ENCODE measurements at regions of chr9 and their contacts with region 1.

Region 1: DNA sequence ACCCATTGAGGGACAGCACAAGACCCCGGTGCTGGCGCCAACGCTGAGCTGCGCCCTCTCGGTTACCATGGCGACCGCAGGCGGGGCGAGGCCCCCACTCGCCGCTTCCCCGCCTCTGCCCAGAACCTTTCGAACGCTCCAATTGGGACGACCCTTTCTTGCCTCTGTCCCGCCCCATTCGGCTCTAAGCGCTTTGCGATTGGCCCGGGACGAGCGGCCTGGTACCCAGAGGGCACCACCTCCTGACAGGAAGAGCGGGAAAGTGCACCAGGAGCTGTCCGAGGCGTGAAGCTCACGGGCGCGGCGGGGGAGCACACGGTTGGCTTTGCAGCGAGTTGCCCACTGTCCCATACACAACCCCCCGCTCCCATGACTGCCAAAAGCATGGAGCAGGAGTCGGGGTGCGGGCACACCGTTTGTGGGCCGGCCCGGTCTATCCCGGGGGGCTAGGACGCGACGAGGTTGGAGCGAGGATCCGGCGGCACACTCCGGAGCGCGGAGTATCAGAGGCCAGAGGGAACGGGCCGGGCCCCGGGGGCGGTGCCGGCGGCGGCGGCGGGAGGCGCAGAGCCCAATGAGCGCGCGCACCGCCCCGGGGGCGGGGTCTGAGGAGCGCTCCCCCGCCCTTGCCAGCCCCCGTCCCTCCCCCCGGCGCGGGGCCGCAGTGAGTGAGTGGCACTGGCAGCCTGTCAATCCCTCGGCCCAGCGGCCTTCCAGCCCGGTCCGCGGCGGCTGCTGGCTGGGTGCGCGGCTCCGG is 978 bp upstream of the PBX3 start:
- DNase-seq: peak; percentile 96
- H3K4me3 ChIP-seq: peak overlapping the region; percentile 60 to 98 (median 96)
- H3K27ac ChIP-seq: peak overlapping the region; percentile 46
- H3K4me1 ChIP-seq: peaks cover 26% of the 10 kb centered on the region
- H3K27me3 ChIP-seq: no peaks in the 10 kb centered on the region
- CTCF ChIP-seq: no peak

Region 2: GRCh38 chr9:125407974-125408900 is 338.0 kb before region 1 on chr9:
- CTCF ChIA-PET with region 1: no interaction called
- dilution Hi-C with region 1: no loop called
- in situ Hi-C with region 1: no loop called
- intact Hi-C with region 1: loop called (anchors 5 kb)
- DNase-seq: peak; percentile 42
- H3K4me3 ChIP-seq: peak overlapping the region; percentile 46 to 71 (median 62)
- H3K27ac ChIP-seq: no peak overlapping the region
- H3K4me1 ChIP-seq: peaks cover 9% of the 10 kb centered on the region
- H3K27me3 ChIP-seq: no peaks in the 10 kb centered on the region
- CTCF ChIP-seq: peak; percentile 60 to 88

Region 3: DNA sequence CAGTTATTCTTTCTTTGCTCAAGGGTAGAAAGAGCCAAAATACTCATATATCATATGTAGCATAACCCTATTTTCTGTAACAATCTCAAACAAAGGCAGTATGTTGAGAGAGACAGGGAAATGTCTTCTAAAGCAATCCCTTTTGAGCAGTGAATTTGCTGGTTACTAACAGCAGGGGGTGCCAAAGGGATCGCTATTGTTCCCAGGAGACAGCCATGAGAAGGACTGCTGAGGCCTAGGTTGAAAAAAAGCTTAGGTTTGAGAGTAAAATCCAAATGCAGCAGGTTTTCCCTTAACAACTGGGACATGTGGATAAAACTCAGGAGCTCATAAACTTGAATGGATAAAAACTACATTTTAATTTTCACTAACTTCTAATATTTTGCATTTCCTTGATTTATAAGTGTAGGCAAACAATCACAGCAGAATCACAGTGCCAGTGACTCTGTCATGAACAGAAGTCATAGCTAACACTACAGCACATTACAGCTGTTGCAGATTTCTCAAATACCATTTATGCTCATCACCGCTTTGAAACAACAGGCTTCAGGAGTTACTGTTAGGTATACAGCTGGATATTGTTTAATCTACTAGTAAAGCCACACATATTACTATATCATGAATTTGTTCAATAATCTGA is 187.6 kb before region 1 on chr9:
- CTCF ChIA-PET with region 1: no interaction called
- dilution Hi-C with region 1: no loop called
- in situ Hi-C with region 1: loop called in 1 of 2 experiments (anchors 25 kb)
- intact Hi-C with region 1: loop called (anchors 1 kb)
- DNase-seq: peak; percentile 54
- H3K4me3 ChIP-seq: no peak overlapping the region
- H3K27ac ChIP-seq: no peak overlapping the region
- H3K4me1 ChIP-seq: no peaks in the 10 kb centered on the region
- H3K27me3 ChIP-seq: no peaks in the 10 kb centered on the region
- CTCF ChIP-seq: peak; percentile 81 to 82

Region 4: GRCh38 chr9:125663127-125663526 is 83.1 kb before region 1 on chr9:
- CTCF ChIA-PET with region 1: no interaction called
- dilution Hi-C with region 1: loop called (anchors 5 kb)
- in situ Hi-C with region 1: no loop called
- intact Hi-C with region 1: no loop called
- DNase-seq: peak; percentile 66
- H3K4me3 ChIP-seq: no peak overlapping the region
- H3K27ac ChIP-seq: no peak overlapping the region
- H3K4me1 ChIP-seq: peaks cover 10% of the 10 kb centered on the region
- H3K27me3 ChIP-seq: no peaks in the 10 kb centered on the region
- CTCF ChIP-seq: no peak

Region 5: DNA sequence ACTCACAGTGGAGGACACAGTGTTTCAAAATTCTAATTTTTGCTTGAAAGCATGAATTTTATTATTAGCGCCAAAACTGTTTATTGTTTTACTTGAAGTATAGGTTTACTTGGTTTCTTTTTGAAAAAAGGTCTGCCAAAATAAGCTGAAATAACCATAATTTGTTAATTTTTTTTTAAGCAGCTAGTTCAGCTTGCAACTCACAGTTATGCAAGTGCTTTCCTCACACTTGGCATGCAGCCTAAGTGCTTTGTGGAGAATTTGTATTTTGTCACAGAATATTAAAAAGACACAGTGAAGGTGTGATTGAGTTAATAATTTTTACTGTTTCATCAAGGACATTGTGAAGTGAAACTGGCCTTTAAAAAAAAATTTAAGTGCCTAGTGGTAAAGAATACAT is 22.6 kb after region 1 on chr9:
- CTCF ChIA-PET with region 1: no interaction called
- dilution Hi-C with region 1: no loop called
- in situ Hi-C with region 1: no loop called
- intact Hi-C with region 1: loop called (anchors 2 kb)
- DNase-seq: no peak
- H3K4me3 ChIP-seq: no peak overlapping the region
- H3K27ac ChIP-seq: no peak overlapping the region
- H3K4me1 ChIP-seq: no peaks in the 10 kb centered on the region
- H3K27me3 ChIP-seq: no peaks in the 10 kb centered on the region
- CTCF ChIP-seq: no peak

Region 6: GRCh38 chr9:125889476-125890419 is 143.6 kb after region 1 on chr9:
- CTCF ChIA-PET with region 1: no interaction called
- dilution Hi-C with region 1: no loop called
- in situ Hi-C with region 1: no loop called
- intact Hi-C with region 1: loop called (anchors 2 kb)
- DNase-seq: peak; percentile 52
- H3K4me3 ChIP-seq: peak overlapping the region; percentile 61 to 75 (median 61)
- H3K27ac ChIP-seq: peak overlapping the region; percentile 83
- H3K4me1 ChIP-seq: peaks cover 27% of the 10 kb centered on the region
- H3K27me3 ChIP-seq: no peaks in the 10 kb centered on the region
- CTCF ChIP-seq: no peak

Region 7: DNA sequence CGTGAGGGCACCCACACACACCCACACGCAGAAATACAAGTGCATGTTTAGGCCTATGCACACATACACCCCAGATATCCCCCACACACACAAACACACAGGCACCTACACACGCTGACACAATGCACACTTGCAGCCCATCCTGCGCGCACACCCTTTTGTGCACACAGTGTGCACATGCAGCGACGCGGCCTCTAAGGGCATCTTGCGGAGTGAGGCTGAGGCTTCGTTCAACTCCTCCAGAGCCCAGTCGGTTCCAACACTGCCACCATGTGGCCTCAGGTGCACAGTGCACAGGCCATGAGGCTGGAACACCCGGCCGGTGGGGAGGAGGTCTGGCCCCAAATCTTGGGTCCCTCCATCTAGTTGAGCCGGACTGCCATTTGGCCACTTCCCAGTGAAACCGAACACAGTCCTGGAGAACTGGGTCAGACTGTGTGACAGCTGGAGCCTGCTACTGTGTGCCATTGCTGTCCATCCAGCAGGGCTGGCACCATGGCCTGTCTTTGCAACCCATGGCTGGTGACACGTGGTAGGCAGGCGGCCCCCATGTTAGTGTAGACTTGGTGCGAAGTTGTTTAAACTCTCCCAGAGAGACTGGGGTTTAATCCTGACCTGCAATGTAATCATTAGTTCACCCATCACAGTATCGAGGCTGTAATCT is 482.7 kb after region 1 on chr9:
- CTCF ChIA-PET with region 1: no interaction called
- dilution Hi-C with region 1: no loop called
- in situ Hi-C with region 1: no loop called
- intact Hi-C with region 1: loop called (anchors 2 kb)
- DNase-seq: peak; percentile 45
- H3K4me3 ChIP-seq: no peak overlapping the region
- H3K27ac ChIP-seq: no peak overlapping the region
- H3K4me1 ChIP-seq: no peaks in the 10 kb centered on the region
- H3K27me3 ChIP-seq: no peaks in the 10 kb centered on the region
- CTCF ChIP-seq: peak; percentile 97 to 98

Measured in mammary epithelial cell (primary cell).